ENCODE measurements at regions of chr11 and their contacts with region 1.

Region 1: DNA sequence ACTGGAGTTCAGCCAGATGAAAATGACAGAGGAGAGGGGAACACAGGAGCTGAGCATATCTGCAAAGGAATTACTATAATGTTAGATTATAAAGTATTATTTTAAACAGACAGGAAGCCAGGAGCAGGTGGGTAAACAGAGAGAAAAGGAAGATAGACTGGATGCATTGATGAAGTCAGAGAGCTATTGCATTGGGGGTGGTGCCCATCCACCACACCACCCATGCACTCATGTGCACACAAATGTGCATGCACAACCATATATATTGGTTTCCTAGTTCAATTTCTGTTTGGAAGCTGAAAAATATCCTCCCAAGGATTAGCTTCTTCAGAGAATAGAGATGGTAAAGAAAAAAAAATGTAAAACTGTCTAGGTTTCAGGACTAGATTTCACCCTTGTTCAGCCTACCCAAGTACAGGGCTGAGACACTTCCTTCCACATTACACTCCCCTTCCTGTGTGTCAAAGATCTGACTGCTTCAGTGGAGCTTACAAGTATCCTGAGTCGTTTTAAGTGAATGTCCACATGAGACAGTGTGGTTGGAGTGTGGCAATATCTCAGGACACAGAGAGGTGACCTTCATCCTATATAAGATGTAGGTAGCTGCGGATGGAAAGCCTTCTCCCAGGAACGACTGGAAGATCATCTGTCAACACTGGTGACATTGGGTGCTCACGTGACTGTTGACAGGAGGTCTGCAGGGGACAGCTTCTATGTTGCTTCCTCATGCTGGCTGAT is 12.2 kb upstream of the SMPD1 start:
- DNase-seq: no peak
- ATAC-seq: peak; percentile 56
- H3K4me3 Mint-ChIP-seq: peak overlapping the region; percentile 42
- H3K27ac Mint-ChIP-seq: peak overlapping the region; percentile 81
- H3K4me1 Mint-ChIP-seq: peaks cover 20% of the 10 kb centered on the region
- H3K27me3 Mint-ChIP-seq: no peaks in the 10 kb centered on the region
- CTCF ChIP-seq: no peak

Region 2: DNA sequence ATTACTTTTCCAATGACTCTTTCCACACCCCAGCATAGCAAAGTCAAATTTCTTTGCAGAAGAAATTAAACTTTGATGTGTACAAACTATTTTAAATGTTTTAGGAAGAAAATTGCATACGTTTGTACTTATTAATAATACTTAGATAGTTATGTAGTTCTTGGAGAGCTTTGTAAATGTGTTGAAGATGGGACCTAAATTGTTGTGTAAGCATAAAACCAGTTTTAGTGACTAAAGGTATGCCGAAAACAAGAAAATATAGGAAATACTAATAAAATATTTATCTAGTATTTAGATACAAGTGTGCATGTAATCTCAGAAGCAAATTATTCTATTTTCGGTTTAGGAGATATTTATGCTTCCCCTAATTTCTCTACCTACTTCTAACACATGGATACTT is 628.2 kb before region 1 on chr11:
- CTCF ChIA-PET with region 1: no interaction called
- POLR2A ChIA-PET with region 1: no interaction called
- intact Hi-C with region 1: no loop called
- DNase-seq: no peak
- ATAC-seq: no peak
- H3K4me3 Mint-ChIP-seq: no peak overlapping the region
- H3K27ac Mint-ChIP-seq: no peak overlapping the region
- H3K4me1 Mint-ChIP-seq: no peaks in the 10 kb centered on the region
- H3K27me3 Mint-ChIP-seq: no peaks in the 10 kb centered on the region
- CTCF ChIP-seq: no peak

Region 3: DNA sequence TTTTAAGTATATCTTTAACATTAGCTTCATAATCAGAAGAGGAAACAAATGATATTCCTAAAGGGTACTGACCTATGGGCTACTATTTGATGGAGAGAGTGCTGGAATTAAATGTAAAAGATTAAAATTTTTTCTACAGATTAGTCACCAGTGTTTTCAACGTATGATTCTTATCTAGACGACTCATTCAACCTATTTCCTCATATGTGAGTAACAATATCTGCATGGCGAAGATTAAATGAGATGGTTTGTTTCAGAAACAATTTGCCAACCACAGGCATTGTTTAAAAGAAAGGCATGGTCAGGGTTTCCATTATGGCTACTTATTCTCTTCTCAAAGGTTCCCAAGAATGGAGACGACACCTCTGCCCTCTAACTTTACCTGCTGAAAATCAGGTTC is 250.2 kb before region 1 on chr11:
- CTCF ChIA-PET with region 1: no interaction called
- POLR2A ChIA-PET with region 1: no interaction called
- intact Hi-C with region 1: no loop called
- DNase-seq: no peak
- ATAC-seq: no peak
- H3K4me3 Mint-ChIP-seq: no peak overlapping the region
- H3K27ac Mint-ChIP-seq: no peak overlapping the region
- H3K4me1 Mint-ChIP-seq: no peaks in the 10 kb centered on the region
- H3K27me3 Mint-ChIP-seq: peaks cover 3% of the 10 kb centered on the region
- CTCF ChIP-seq: no peak

Region 4: GRCh38 chr11:6353367-6353987 is 24.6 kb before region 1 on chr11:
- CTCF ChIA-PET with region 1: interaction called, 12 read pairs
- POLR2A ChIA-PET with region 1: no interaction called
- intact Hi-C with region 1: no loop called
- DNase-seq: peak; percentile 29
- ATAC-seq: peak; percentile 88
- H3K4me3 Mint-ChIP-seq: no peak overlapping the region
- H3K27ac Mint-ChIP-seq: no peak overlapping the region
- H3K4me1 Mint-ChIP-seq: peaks cover 3% of the 10 kb centered on the region
- H3K27me3 Mint-ChIP-seq: peaks cover 7% of the 10 kb centered on the region
- CTCF ChIP-seq: no peak

Region 5: DNA sequence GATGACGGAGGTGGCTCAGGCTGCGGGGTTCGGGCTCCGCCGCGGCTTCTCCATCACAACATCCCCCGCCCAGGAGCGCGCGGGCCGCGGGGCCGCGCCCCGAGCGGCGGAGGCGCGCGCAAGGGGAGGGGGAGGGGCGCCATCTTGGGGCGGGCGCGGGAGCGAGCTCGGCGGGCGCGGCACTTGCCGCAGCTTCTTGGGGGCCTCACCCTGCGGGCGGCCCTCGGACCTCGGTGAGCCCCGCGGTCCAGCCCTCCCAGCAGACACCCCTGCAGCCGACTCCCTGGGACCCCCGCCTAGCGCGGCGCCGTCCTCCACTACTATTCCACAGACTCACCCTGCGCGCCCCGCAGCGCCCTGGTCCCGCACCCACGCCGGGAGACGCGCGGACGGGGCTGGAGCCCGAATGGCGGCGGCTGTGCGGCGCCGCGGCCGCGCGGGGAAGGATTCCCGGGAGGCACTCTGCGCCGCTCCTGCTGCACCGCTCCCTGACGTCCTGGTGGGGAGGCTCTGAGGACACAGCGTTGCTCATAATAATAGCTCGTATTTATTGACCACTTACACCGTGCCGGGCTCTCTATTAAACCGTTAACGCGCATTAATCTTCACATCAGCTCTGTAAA is 41.0 kb after region 1 on chr11 and contains the start of gene APBB1:
- CTCF ChIA-PET with region 1: interaction called, 22 read pairs
- POLR2A ChIA-PET with region 1: interaction called, 8 read pairs
- intact Hi-C with region 1: loop called (anchors 1 kb)
- DNase-seq: peak; percentile 76
- ATAC-seq: peak; percentile 80
- H3K4me3 Mint-ChIP-seq: peak within 1 kb of the TSS; percentile 80
- H3K27ac Mint-ChIP-seq: peak within 1 kb of the TSS; percentile 71
- H3K4me1 Mint-ChIP-seq: peaks cover 4% of the 10 kb centered on the region
- H3K27me3 Mint-ChIP-seq: peaks cover 27% of the 10 kb centered on the region
- CTCF ChIP-seq: no peak
- total RNA-seq, gene APBB1: 20.6 and 22.1 TPM in 2 replicates

Region 6: DNA sequence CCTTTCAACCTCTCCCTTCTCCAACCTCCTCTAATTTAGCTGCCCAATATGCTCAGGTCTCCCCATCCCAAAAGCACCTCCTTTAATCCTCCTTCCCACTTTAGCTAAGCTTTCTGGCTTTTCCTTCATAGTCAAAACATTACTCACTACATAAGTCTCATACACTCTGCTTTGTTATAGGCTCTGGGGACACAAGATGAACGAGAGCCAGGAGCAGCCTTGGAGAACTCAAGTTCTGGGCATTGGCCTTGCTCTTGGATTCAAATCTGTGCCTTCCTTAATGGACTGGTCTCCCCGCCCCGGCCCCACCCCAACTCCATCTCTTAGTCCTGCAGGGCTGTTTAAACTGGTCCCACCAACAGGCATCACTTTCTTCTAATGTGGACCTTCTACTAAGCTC is 74.1 kb after region 1 on chr11:
- CTCF ChIA-PET with region 1: interaction called, 331 read pairs
- POLR2A ChIA-PET with region 1: no interaction called
- intact Hi-C with region 1: no loop called
- DNase-seq: no peak
- ATAC-seq: no peak
- H3K4me3 Mint-ChIP-seq: no peak overlapping the region
- H3K27ac Mint-ChIP-seq: no peak overlapping the region
- H3K4me1 Mint-ChIP-seq: no peaks in the 10 kb centered on the region
- H3K27me3 Mint-ChIP-seq: no peaks in the 10 kb centered on the region
- CTCF ChIP-seq: no peak

Region 7: GRCh38 chr11:6505577-6506240 is 127.6 kb after region 1 on chr11:
- CTCF ChIA-PET with region 1: interaction called, 124 read pairs
- POLR2A ChIA-PET with region 1: interaction called, 10 read pairs
- intact Hi-C with region 1: loop called (anchors 1 kb)
- DNase-seq: no peak
- ATAC-seq: peak; percentile 37
- H3K4me3 Mint-ChIP-seq: no peak overlapping the region
- H3K27ac Mint-ChIP-seq: no peak overlapping the region
- H3K4me1 Mint-ChIP-seq: no peaks in the 10 kb centered on the region
- H3K27me3 Mint-ChIP-seq: no peaks in the 10 kb centered on the region
- CTCF ChIP-seq: no peak

Region 8: DNA sequence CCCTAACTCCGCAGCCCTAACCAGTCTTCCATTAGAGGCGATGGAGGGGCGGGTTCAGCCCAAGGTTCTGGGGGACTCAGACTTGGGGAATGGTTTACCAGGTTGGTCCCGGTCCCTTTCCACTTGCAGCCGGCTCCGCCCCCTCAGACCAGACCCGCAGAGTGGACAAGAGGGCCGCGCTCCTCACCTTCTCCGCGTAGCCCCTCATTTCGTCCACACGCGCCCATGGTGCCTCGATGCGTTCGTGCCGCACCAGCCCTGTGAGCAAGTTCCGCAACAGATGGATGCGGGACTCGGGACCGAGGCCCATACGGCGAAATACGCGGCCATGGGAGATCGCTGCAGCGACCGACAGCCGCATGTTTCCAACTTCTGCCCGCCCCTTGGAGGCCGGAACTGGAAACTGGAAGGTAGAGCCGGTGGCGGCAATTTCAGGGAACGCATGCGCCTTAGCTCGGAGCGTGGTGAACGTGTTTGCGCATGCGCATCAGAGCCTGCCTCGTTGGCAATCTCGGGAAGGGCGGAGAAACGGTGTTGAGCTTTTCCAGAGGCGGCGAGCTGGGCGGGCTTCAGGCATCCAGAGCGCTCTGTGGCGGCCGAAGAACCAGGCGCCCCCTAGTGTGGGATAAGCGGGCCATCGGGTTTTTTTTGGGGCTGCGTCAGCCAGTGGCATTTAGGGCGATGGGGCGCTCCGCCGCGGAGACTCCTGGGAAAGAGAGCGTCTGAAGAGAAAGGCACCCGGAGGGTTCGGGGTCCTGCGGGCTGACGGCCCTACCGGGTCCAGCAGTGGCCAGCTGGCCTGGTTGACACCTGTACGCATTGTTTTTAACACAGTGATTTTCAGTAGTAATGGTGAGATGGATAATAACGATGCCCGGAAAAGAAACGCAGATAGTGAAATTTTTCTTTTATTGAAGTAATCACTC is 305.1 kb after region 1 on chr11 and contains the start of gene MRPL17:
- CTCF ChIA-PET with region 1: interaction called, 17 read pairs
- POLR2A ChIA-PET with region 1: no interaction called
- intact Hi-C with region 1: loop called (anchors 1 kb)
- DNase-seq: peak; percentile 94
- ATAC-seq: peak; percentile 95
- H3K4me3 Mint-ChIP-seq: peak within 1 kb of the TSS; percentile 99
- H3K27ac Mint-ChIP-seq: peak within 1 kb of the TSS; percentile 98
- H3K4me1 Mint-ChIP-seq: peaks cover 24% of the 10 kb centered on the region
- H3K27me3 Mint-ChIP-seq: no peaks in the 10 kb centered on the region
- CTCF ChIP-seq: peak; percentile 73
- total RNA-seq, gene MRPL17: 34.1 and 34.2 TPM in 2 replicates